ENCODE measurements at regions of chr18 and their contacts with region 1.

Region 1: GRCh38 chr18:24118750-24119577 is 19.9 kb upstream of the CABYR start:
- DNase-seq: peak; percentile 74 to 79
- ATAC-seq: peak; percentile 80
- H3K4me3 ChIP-seq: no peak overlapping the region
- H3K27ac ChIP-seq: no peak overlapping the region
- H3K4me1 ChIP-seq: no peaks in the 10 kb centered on the region
- H3K27me3 ChIP-seq: no peaks in the 10 kb centered on the region

Region 2: GRCh38 chr18:23619388-23619881 is 499.5 kb before region 1 on chr18:
- intact Hi-C with region 1: loop called in 1 of 2 experiments (anchors 5 kb)
- DNase-seq: peak; percentile 57 to 75
- ATAC-seq: peak; percentile 79
- H3K4me3 ChIP-seq: peak overlapping the region in 1 of 2 donors; percentile 56
- H3K27ac ChIP-seq: no peak overlapping the region
- H3K4me1 ChIP-seq: no peaks in the 10 kb centered on the region
- H3K27me3 ChIP-seq: no peaks in the 10 kb centered on the region

Region 3: DNA sequence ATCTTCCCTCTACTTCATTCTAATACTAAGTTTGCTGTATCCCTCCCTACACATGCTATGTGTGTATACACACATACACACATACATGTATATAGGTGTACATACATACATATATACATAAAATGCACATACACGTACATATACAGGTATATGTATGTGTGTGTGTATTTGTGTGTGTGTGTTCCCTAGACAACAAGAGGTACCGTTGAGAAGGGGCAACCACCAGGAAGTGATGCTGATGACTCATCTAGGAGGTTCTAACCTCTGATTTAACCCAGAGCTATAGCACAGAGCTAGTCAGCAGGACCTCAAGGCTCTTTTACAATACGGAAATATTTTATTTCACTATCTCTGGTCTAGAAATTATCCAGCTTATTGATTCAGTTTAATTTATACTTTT is 290.5 kb before region 1 on chr18:
- intact Hi-C with region 1: loop called in 1 of 2 experiments (anchors 10 kb)
- DNase-seq: no peak
- ATAC-seq: no peak
- H3K4me3 ChIP-seq: no peak overlapping the region
- H3K27ac ChIP-seq: no peak overlapping the region
- H3K4me1 ChIP-seq: peaks cover 0 to 7% of the 10 kb centered on the region in 2 donors
- H3K27me3 ChIP-seq: no peaks in the 10 kb centered on the region

Region 4: GRCh38 chr18:23982155-23983079 is 136.5 kb before region 1 on chr18:
- intact Hi-C with region 1: no loop called
- DNase-seq: peak; percentile 87 to 92
- ATAC-seq: peak; percentile 86
- H3K4me3 ChIP-seq: no peak overlapping the region
- H3K27ac ChIP-seq: no peak overlapping the region
- H3K4me1 ChIP-seq: no peaks in the 10 kb centered on the region
- H3K27me3 ChIP-seq: no peaks in the 10 kb centered on the region

Region 5: DNA sequence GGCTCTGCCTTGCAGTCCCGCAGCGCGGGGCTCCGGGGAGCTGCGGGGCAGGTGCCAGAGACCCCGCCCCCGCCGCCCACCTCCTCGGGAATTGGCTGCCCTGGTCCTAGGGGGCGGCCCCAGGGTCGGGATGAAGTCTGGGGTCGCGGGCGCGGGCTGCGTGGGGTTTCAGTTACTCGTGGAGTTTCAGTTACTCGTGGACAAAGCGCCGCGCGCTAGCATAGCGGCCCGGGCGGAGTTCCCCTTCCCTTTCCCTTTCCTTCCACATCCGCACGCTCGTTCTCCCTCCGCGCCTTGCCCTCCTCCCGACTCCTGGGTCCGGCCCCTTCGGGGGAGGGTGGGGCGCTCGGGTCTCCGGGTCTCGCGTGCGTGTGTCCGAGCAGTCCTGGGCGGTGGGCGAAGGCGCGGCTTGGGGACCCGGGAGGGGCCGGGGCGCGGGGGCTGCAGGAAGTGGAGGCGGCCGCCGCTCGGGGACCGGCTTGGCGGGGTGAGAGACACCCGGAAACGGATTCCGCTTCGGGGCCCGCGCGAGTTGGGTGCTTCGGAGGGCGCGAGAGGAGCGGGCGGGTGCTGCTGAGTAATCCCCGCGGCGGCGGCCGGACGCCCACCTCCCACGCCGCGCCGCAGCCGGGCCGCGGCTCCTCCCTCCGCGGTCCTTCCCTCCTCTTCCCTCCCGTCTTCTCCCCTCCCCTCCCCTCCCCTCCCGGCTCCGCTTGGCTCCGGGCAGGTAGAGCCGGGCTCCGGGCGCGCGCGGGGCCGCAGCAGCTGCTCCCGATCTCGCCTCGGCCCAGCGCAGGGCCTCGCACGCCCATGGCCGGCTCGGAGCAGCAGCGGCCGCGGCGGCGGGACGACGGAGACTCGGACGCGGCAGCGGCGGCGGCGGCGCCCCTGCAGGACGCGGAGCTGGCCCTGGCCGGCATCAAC is 104.6 kb before region 1 on chr18 and contains the start of gene TTC39C:
- intact Hi-C with region 1: loop called in 1 of 2 experiments (anchors 10 kb)
- DNase-seq: peak; percentile 84 to 90
- ATAC-seq: peak; percentile 83
- H3K4me3 ChIP-seq: peak within 1 kb of the TSS; percentile 88 to 93
- H3K27ac ChIP-seq: peak within 1 kb of the TSS in 1 of 2 donors; percentile 27
- H3K4me1 ChIP-seq: no peaks in the 10 kb centered on the region
- H3K27me3 ChIP-seq: no peaks in the 10 kb centered on the region
- total RNA-seq, gene TTC39C: 13.4 to 21.2 TPM

Region 6: GRCh38 chr18:24170389-24170788 is 51.4 kb after region 1 on chr18:
- intact Hi-C with region 1: no loop called
- DNase-seq: no peak
- ATAC-seq: no peak
- H3K4me3 ChIP-seq: no peak overlapping the region
- H3K27ac ChIP-seq: no peak overlapping the region
- H3K4me1 ChIP-seq: no peaks in the 10 kb centered on the region
- H3K27me3 ChIP-seq: no peaks in the 10 kb centered on the region